ENCODE measurements at regions of chr13 and their contacts with region 1.

Region 1: GRCh38 chr13:28658796-28659620 is at the start of gene POMP:
- DNase-seq: peak; percentile 94
- H3K4me3 Mint-ChIP-seq: peak within 1 kb of the TSS; percentile 97
- H3K27ac Mint-ChIP-seq: peak within 1 kb of the TSS; percentile 96
- H3K4me1 Mint-ChIP-seq: peaks cover 51% of the 10 kb centered on the region
- H3K27me3 Mint-ChIP-seq: no peaks in the 10 kb centered on the region
- total RNA-seq, gene POMP: 75.1 to 76.6 TPM

Region 2: DNA sequence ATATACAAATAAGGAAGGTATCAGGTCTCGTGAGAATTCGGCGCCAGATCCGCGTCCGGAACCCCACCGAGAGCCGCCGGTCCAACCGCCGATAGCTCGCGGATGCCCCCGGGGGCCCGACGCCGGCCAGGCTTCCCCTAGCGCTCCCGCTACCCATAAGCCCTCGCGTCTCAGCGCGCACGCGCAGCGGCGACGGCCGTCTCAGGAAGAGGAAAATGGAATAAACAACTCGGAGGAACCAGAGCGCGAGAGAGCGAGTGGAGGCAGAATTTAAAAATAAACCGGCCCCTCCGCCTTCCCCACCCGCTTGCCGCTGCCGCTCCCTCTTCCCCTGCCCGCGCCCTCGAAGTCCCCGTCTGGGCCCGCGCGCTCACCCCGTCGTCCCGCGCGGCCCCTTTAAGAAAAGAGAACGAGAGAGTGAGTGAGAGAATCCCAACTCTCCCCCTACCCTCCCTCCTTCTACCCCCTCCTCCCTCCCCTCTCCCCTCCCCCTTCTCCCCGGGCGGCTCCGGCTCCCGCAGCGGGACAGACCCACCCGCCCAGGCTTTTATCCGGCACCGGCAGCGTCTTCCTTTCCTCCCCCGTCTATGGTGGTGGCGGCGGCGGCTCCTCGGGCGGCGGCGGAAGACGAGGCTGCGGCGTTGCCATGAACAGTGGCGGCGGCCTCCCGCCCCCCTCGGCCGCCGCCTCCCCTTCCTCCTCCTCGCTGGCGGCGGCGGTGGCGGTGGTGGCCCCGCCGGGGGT is 520.8 kb before region 1 on chr13 and contains the start of gene PAN3:
- CTCF ChIA-PET with region 1: no interaction called
- POLR2A ChIA-PET with region 1: interaction called, 26 read pairs
- DNase-seq: peak; percentile 93
- H3K4me3 Mint-ChIP-seq: peak within 1 kb of the TSS; percentile 85
- H3K27ac Mint-ChIP-seq: peak within 1 kb of the TSS; percentile 97
- H3K4me1 Mint-ChIP-seq: peaks cover 42% of the 10 kb centered on the region
- H3K27me3 Mint-ChIP-seq: no peaks in the 10 kb centered on the region
- total RNA-seq, gene PAN3: 37.7 to 40.1 TPM

Region 3: DNA sequence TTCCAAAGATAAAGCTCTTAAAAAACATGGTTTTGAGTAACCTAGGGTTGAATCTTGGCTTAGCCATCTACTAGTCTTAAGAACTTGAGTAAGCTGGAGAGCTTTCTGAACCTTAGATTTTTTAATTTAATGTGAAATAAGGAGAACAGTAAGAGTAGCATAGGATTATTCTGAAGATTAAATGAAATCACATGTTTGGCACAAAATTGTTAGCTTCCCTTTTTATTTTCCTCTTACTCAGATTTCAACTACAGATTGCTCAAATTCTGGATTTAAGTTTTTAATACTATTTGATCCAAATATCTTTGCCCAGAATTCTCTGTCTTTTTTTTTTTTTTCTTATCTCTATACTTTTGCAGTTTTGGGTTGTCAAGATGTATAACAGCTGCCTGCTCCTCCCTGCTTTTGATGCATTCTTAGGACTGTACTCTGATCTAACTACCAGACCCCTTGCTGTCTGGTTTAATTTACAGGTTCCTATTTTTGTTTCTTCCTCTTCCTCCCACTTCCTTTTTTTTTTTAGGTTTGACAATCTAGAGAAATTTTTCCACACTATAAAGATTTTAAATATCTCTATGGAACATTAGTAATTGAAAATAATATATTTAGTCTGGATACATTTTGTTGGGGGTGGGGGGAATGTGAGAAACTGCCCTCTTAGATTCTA is 12.3 kb after region 1 on chr13:
- CTCF ChIA-PET with region 1: interaction called, 4 read pairs
- POLR2A ChIA-PET with region 1: interaction called, 32 read pairs
- DNase-seq: no peak
- H3K4me3 Mint-ChIP-seq: no peak overlapping the region
- H3K27ac Mint-ChIP-seq: no peak overlapping the region
- H3K4me1 Mint-ChIP-seq: no peaks in the 10 kb centered on the region
- H3K27me3 Mint-ChIP-seq: no peaks in the 10 kb centered on the region

Region 4: GRCh38 chr13:28718543-28719226 is 59.7 kb after region 1 on chr13 and contains the start of gene SLC46A3:
- CTCF ChIA-PET with region 1: no interaction called
- POLR2A ChIA-PET with region 1: interaction called, 37 read pairs
- DNase-seq: peak; percentile 97
- H3K4me3 Mint-ChIP-seq: peak within 1 kb of the TSS; percentile 90
- H3K27ac Mint-ChIP-seq: peak within 1 kb of the TSS; percentile 72
- H3K4me1 Mint-ChIP-seq: peaks cover 28% of the 10 kb centered on the region
- H3K27me3 Mint-ChIP-seq: peaks cover 2% of the 10 kb centered on the region
- total RNA-seq, gene SLC46A3: 9.6 to 10.9 TPM